ENCODE measurements at regions of chr1 and their contacts with region 1.

Region 1: GRCh38 chr1:212566522-212567479 is 41.8 kb upstream of the ATF3 start:
- DNase-seq: peak; percentile 87
- H3K4me3 ChIP-seq: peak overlapping the region in 2 of 3 experiments; percentile 45 to 76
- H3K27ac ChIP-seq: peak overlapping the region; percentile 70
- H3K4me1 ChIP-seq: peaks cover 18% of the 10 kb centered on the region
- H3K27me3 ChIP-seq: no peaks in the 10 kb centered on the region
- CTCF ChIP-seq: no peak
- POLR2A ChIP-seq: peak; percentile 47

Region 2: DNA sequence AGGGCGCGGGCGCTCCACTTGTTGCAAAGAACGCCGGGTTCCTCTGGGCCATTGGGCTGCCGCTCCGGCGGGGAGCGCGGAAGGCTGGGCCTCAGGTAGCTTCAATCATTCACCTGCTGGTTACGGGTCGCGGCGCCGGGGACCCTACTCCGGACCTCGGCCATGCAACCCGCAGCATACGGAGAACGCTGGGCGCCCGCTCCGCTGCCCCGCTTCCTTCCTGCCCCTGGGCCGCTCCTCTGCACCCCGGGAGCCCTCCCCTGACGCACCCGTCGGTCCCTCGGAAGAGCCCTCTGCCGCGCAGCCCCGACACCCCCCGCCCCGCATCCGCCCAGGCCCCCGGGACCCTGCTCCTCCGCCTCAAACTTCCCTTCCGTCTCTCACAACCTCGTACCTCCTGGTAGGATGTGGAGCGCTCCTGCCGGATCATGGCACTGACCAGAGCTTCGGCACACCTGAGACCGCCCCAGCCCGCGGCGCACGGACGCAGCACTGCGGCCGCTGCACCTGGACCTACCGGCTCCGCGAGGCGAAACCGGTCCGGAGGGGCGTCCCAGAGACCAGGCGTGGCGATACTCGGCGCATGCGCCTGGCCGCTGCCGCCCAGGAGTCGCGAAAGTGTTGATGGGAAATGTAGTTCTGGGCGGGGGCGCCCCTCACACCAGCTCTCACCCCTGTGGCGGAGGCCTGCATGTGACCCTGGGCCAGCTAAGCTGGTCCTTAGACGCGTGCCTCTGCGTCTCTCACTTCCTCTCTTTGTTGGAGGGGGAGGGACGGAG is 152.3 kb before region 1 on chr1 and contains the start of gene PACC1:
- CTCF ChIA-PET with region 1: no interaction called
- POLR2A ChIA-PET with region 1: no interaction called
- dilution Hi-C with region 1: no loop called
- intact Hi-C with region 1: no loop called
- DNase-seq: peak; percentile 92
- H3K4me3 ChIP-seq: peak within 1 kb of the TSS; percentile 44 to 80 (median 73)
- H3K27ac ChIP-seq: no peak within 1 kb of the TSS
- H3K4me1 ChIP-seq: peaks cover 6% of the 10 kb centered on the region
- H3K27me3 ChIP-seq: no peaks in the 10 kb centered on the region
- CTCF ChIP-seq: peak in 1 of 2 donors; percentile 25
- POLR2A ChIP-seq: peak; percentile 65
- total RNA-seq, gene PACC1: 18.4 and 21.0 TPM in 2 replicates

Region 3: GRCh38 chr1:212578041-212578440 is 11.2 kb after region 1 on chr1:
- CTCF ChIA-PET with region 1: interaction called, 10 read pairs
- POLR2A ChIA-PET with region 1: no interaction called
- dilution Hi-C with region 1: no loop called
- intact Hi-C with region 1: no loop called
- DNase-seq: no peak
- H3K4me3 ChIP-seq: no peak overlapping the region
- H3K27ac ChIP-seq: no peak overlapping the region
- H3K4me1 ChIP-seq: no peaks in the 10 kb centered on the region
- H3K27me3 ChIP-seq: peaks cover 2 to 3% of the 10 kb centered on the region in 2 experiments
- CTCF ChIP-seq: no peak
- POLR2A ChIP-seq: no peak

Region 4: DNA sequence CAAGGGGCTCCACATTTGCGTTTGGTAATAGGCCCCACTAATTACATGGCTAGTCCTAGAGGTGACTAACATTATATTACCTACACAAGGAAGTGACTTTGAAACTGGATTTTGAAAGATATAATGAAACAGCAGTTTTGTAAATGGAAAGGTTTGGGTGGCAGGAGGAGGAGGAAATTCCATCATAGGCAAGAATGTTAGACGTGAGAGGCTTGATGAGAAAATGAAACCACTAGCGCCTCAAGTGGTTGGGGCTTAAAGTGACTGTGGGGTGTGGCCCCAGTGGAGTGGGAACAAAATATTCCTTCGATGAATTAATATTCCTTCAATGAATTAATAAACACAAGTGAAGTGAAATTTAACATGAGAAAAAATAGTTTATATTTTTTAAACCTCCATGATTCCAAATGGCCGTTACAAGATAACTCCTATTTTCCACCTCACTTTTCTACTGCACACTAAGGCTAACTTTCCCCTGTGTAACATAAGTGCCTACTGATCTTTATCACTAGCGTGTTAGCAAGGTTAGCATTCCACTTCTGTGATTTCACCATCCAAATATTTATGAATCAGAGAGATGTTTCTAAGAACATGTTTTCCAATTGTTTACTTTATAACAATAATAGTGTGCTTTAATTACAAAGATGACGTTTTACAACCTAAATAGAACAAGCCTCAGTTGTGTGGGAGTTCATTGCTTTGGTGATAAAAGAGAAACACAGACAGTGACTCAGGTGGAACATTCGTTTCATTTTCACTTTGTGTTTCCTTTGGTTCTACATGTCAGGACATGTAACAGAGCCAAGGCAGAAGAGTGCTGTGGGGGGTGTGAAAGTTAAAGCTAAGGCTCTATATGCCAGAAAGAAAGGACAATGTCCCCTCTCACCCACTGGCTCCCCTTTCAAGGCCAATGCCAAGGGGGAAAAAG is 29.2 kb after region 1 on chr1:
- CTCF ChIA-PET with region 1: interaction called, 3 read pairs
- POLR2A ChIA-PET with region 1: no interaction called
- dilution Hi-C with region 1: no loop called
- intact Hi-C with region 1: loop called (anchors 1 kb)
- DNase-seq: peak; percentile 96
- H3K4me3 ChIP-seq: peak overlapping the region in 1 of 3 experiments; percentile 41
- H3K27ac ChIP-seq: peak overlapping the region; percentile 99
- H3K4me1 ChIP-seq: peaks cover 15% of the 10 kb centered on the region
- H3K27me3 ChIP-seq: peaks cover 8 to 11% of the 10 kb centered on the region in 2 experiments
- CTCF ChIP-seq: peak; percentile 55 to 81
- POLR2A ChIP-seq: no peak